ENCODE measurements at regions of chr18 and their contacts with region 1.

Region 1: GRCh38 chr18:29912351-29912750 is 1130.2 kb downstream of the DSC3 start:
- DNase-seq: no peak
- ATAC-seq: no peak

Region 2: GRCh38 chr18:29979881-29980280 is 67.5 kb after region 1 on chr18:
- intact Hi-C with region 1: loop called (anchors 10 kb)
- DNase-seq: no peak
- ATAC-seq: no peak

Region 3: GRCh38 chr18:30044496-30044895 is 132.1 kb after region 1 on chr18:
- intact Hi-C with region 1: no loop called
- DNase-seq: no peak
- ATAC-seq: no peak

Measured in Right ventricle myocardium superior (tissue), 1 donor.